PC-3 (cell line): ENCODE measurements at regions of chr2 and their contacts with region 1.

Region 1: GRCh38 chr2:203014456-203015199 is at the start of gene NBEAL1:
- DNase-seq: peak; percentile 99
- ATAC-seq: peak; percentile 89
- H3K4me3 ChIP-seq: peak within 1 kb of the TSS; percentile 90
- H3K27ac ChIP-seq: peak within 1 kb of the TSS; percentile 72
- H3K4me1 ChIP-seq: peaks cover 39% of the 10 kb centered on the region
- H3K27me3 ChIP-seq: no peaks in the 10 kb centered on the region
- CTCF ChIP-seq: no peak
- total RNA-seq, gene NBEAL1: 9.9 and 14.5 TPM in 2 replicates

Region 2: GRCh38 chr2:202911512-202912341 is 102.9 kb before region 1 on chr2 and contains the starts of genes CARF and WDR12:
- CTCF ChIA-PET with region 1: no interaction called
- POLR2A ChIA-PET with region 1: no interaction called
- intact Hi-C with region 1: loop called (anchors 1 kb)
- DNase-seq: peak; percentile 93
- ATAC-seq: peak; percentile 81
- H3K4me3 ChIP-seq: peak within 1 kb of the TSS; percentile 89
- H3K27ac ChIP-seq: peak within 1 kb of the TSS; percentile 75
- H3K4me1 ChIP-seq: peaks cover 12% of the 10 kb centered on the region; the same call in 1 of the 2 replicates
- H3K27me3 ChIP-seq: no peaks in the 10 kb centered on the region
- CTCF ChIP-seq: no peak
- total RNA-seq, gene CARF: 1.6 and 4.4 TPM in 2 replicates
- total RNA-seq, gene WDR12: 60.5 and 65.4 TPM in 2 replicates